ENCODE measurements at regions of chr12 and their contacts with region 1.

Region 1: GRCh38 chr12:120710031-120710804 is at the start of gene UNC119B:
- DNase-seq: peak; percentile 90
- CTCF ChIP-seq: no peak

Region 2: GRCh38 chr12:120598674-120599463 is 111.3 kb before region 1 on chr12:
- in situ Hi-C with region 1: loop called (anchors 10 kb)
- DNase-seq: peak; percentile 54
- CTCF ChIP-seq: no peak

Region 3: GRCh38 chr12:120856980-120857379 is 146.8 kb after region 1 on chr12:
- in situ Hi-C with region 1: no loop called
- DNase-seq: no peak
- CTCF ChIP-seq: peak; percentile 46

Measured in GM13976 (cell line).